MCF 10A (cell line): ENCODE measurements at regions of chr4 and their contacts with region 1.

Region 1: GRCh38 chr4:47122592-47123291 is 91.4 kb downstream of the GABRB1 start:
- DNase-seq: peak; percentile 86
- H3K4me3 Mint-ChIP-seq: no peak overlapping the region
- H3K27ac Mint-ChIP-seq: no peak overlapping the region
- H3K4me1 Mint-ChIP-seq: no peaks in the 10 kb centered on the region
- H3K27me3 Mint-ChIP-seq: peaks cover 60% of the 10 kb centered on the region
- CTCF ChIP-seq: peak; percentile 85

Region 2: DNA sequence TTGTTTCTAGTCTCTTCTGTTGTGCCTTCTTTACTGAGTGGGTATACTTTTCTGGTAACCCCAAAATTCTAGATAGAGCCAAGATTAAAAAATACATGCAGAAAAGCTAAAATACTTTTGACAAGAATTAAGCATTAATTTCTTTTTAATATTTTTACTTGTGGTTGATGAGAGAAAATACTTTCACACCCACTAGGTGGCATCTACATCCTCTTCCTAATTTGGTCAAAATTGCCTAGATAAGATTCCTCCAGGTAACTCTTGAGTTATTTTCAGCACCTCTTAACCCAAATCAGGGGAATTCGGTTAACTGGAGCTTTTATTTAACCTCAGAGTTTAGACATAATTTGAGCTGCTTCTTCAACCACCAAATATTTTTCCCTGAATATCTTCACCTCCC is 185.2 kb before region 1 on chr4:
- CTCF ChIA-PET with region 1: interaction called, 13 read pairs
- POLR2A ChIA-PET with region 1: interaction called, 3 read pairs
- intact Hi-C with region 1: loop called (anchors 1 kb)
- DNase-seq: peak; percentile 22
- H3K4me3 Mint-ChIP-seq: no peak overlapping the region
- H3K27ac Mint-ChIP-seq: no peak overlapping the region
- H3K4me1 Mint-ChIP-seq: no peaks in the 10 kb centered on the region
- H3K27me3 Mint-ChIP-seq: peaks cover 77% of the 10 kb centered on the region
- CTCF ChIP-seq: no peak

Region 3: GRCh38 chr4:47109379-47109778 is 13.4 kb before region 1 on chr4:
- CTCF ChIA-PET with region 1: interaction called, 17 read pairs
- POLR2A ChIA-PET with region 1: no interaction called
- intact Hi-C with region 1: no loop called
- DNase-seq: no peak
- H3K4me3 Mint-ChIP-seq: no peak overlapping the region
- H3K27ac Mint-ChIP-seq: no peak overlapping the region
- H3K4me1 Mint-ChIP-seq: no peaks in the 10 kb centered on the region
- H3K27me3 Mint-ChIP-seq: peaks cover 70% of the 10 kb centered on the region
- CTCF ChIP-seq: no peak

Region 4: GRCh38 chr4:47145630-47146029 is 22.9 kb after region 1 on chr4:
- CTCF ChIA-PET with region 1: interaction called, 14 read pairs
- POLR2A ChIA-PET with region 1: no interaction called
- intact Hi-C with region 1: no loop called
- DNase-seq: peak; percentile 25
- H3K4me3 Mint-ChIP-seq: no peak overlapping the region
- H3K27ac Mint-ChIP-seq: no peak overlapping the region
- H3K4me1 Mint-ChIP-seq: no peaks in the 10 kb centered on the region
- H3K27me3 Mint-ChIP-seq: peaks cover 89% of the 10 kb centered on the region
- CTCF ChIP-seq: no peak

Region 5: GRCh38 chr4:47485047-47485692 is 362.4 kb after region 1 on chr4 and contains the start of gene ATP10D:
- CTCF ChIA-PET with region 1: no interaction called
- POLR2A ChIA-PET with region 1: no interaction called
- intact Hi-C with region 1: no loop called
- DNase-seq: peak; percentile 90
- H3K4me3 Mint-ChIP-seq: peak within 1 kb of the TSS; percentile 94
- H3K27ac Mint-ChIP-seq: peak within 1 kb of the TSS; percentile 99
- H3K4me1 Mint-ChIP-seq: peaks cover 6% of the 10 kb centered on the region
- H3K27me3 Mint-ChIP-seq: no peaks in the 10 kb centered on the region
- CTCF ChIP-seq: no peak
- total RNA-seq, gene ATP10D: 16.2 and 16.9 TPM in 2 replicates